ENCODE measurements at regions of chr4 and their contacts with region 1.

Region 1: DNA sequence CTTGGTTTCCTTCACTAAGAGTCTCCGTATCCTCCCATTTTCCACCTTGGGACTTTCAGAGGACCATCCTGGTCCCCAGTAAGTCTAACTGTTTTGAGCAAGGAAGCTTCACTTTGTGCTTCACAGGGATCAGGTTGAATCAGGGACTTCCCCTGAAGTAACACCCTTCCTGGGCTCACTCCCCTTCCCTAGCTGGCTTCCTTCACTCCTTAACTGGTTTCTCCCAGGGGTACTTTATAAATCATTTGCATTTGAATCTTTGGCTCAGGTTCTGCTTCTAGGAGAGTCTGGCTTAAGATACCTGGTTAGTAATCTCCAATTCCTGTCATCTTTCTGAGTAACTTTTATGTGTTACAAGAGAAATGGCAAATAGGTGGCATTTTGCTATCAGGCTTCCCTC is 24.5 kb upstream of the GRIA2 start:
- DNase-seq: no peak
- ATAC-seq: no peak
- H3K4me3 ChIP-seq: no peak overlapping the region
- H3K27ac ChIP-seq: no peak overlapping the region
- H3K4me1 ChIP-seq: no peaks in the 10 kb centered on the region
- H3K27me3 ChIP-seq: no peaks in the 10 kb centered on the region
- CTCF ChIP-seq: no peak
- POLR2A ChIP-seq: no peak

Region 2: GRCh38 chr4:156475322-156475721 is 720.7 kb before region 1 on chr4:
- intact Hi-C with region 1: loop called (anchors 10 kb)
- DNase-seq: peak in 1 of 4 donors; percentile 8
- ATAC-seq: peak; percentile 64
- H3K4me3 ChIP-seq: no peak overlapping the region
- H3K27ac ChIP-seq: no peak overlapping the region
- H3K4me1 ChIP-seq: no peaks in the 10 kb centered on the region
- H3K27me3 ChIP-seq: no peaks in the 10 kb centered on the region
- CTCF ChIP-seq: peak; percentile 7 to 69 (median 54)
- POLR2A ChIP-seq: no peak

Region 3: GRCh38 chr4:157048248-157048647 is 147.8 kb before region 1 on chr4:
- intact Hi-C with region 1: no loop called
- DNase-seq: peak in 3 of 4 donors; percentile 16 to 45 (median 23)
- ATAC-seq: no peak
- H3K4me3 ChIP-seq: no peak overlapping the region
- H3K27ac ChIP-seq: no peak overlapping the region
- H3K4me1 ChIP-seq: no peaks in the 10 kb centered on the region
- H3K27me3 ChIP-seq: no peaks in the 10 kb centered on the region
- CTCF ChIP-seq: no peak
- POLR2A ChIP-seq: no peak

Measured in body of pancreas (tissue), 4 donors.